Mammary epithelial cell (primary cell): ENCODE measurements at regions of chr7 and their contacts with region 1.

Region 1: GRCh38 chr7:5854738-5855137 is 25.9 kb upstream of the OCM start:
- DNase-seq: no peak
- H3K4me3 ChIP-seq: no peak overlapping the region
- H3K27ac ChIP-seq: no peak overlapping the region
- H3K4me1 ChIP-seq: no peaks in the 10 kb centered on the region
- H3K27me3 ChIP-seq: no peaks in the 10 kb centered on the region
- CTCF ChIP-seq: no peak

Region 2: GRCh38 chr7:5694912-5695726 is 159.6 kb before region 1 on chr7:
- CTCF ChIA-PET with region 1: no interaction called
- dilution Hi-C with region 1: no loop called
- in situ Hi-C with region 1: no loop called
- intact Hi-C with region 1: no loop called
- DNase-seq: peak; percentile 69
- H3K4me3 ChIP-seq: peak overlapping the region in 1 of 3 experiments; percentile 13
- H3K27ac ChIP-seq: peak overlapping the region; percentile 1
- H3K4me1 ChIP-seq: peaks cover 69% of the 10 kb centered on the region
- H3K27me3 ChIP-seq: no peaks in the 10 kb centered on the region
- CTCF ChIP-seq: no peak

Region 3: DNA sequence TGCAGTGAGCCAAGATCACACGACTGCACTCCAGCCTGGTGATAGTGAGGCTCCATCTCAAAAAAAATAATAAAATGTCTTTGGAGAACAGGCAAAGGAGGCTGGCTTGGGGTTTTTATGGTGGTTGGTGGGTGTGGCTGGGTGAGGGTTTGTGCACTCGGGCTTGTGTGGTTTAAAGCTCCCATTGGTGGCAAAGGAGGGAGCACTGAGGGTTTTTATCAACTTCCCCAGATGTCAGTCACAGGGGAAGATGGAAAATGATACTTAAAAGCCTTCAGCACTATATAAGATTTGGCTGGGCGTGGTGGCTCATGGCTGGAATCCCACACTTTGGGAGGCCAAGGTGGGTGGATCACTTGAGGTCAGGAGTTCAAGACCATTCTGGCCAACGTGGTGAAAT is 57.0 kb before region 1 on chr7:
- CTCF ChIA-PET with region 1: no interaction called
- dilution Hi-C with region 1: loop called (anchors 5 kb)
- in situ Hi-C with region 1: no loop called
- intact Hi-C with region 1: no loop called
- DNase-seq: no peak
- H3K4me3 ChIP-seq: no peak overlapping the region
- H3K27ac ChIP-seq: no peak overlapping the region
- H3K4me1 ChIP-seq: no peaks in the 10 kb centered on the region
- H3K27me3 ChIP-seq: no peaks in the 10 kb centered on the region
- CTCF ChIP-seq: no peak

Region 4: GRCh38 chr7:5997222-5997808 is 142.6 kb after region 1 on chr7:
- CTCF ChIA-PET with region 1: no interaction called
- dilution Hi-C with region 1: no loop called
- in situ Hi-C with region 1: no loop called
- intact Hi-C with region 1: loop called (anchors 10 kb)
- DNase-seq: peak; percentile 36
- H3K4me3 ChIP-seq: no peak overlapping the region
- H3K27ac ChIP-seq: no peak overlapping the region
- H3K4me1 ChIP-seq: peaks cover 5% of the 10 kb centered on the region
- H3K27me3 ChIP-seq: no peaks in the 10 kb centered on the region
- CTCF ChIP-seq: peak; percentile 36 to 52

Region 5: GRCh38 chr7:6160191-6160623 is 305.5 kb after region 1 on chr7:
- CTCF ChIA-PET with region 1: no interaction called
- dilution Hi-C with region 1: no loop called
- in situ Hi-C with region 1: no loop called
- intact Hi-C with region 1: loop called (anchors 5 kb)
- DNase-seq: peak; percentile 6
- H3K4me3 ChIP-seq: no peak overlapping the region
- H3K27ac ChIP-seq: no peak overlapping the region
- H3K4me1 ChIP-seq: no peaks in the 10 kb centered on the region
- H3K27me3 ChIP-seq: no peaks in the 10 kb centered on the region
- CTCF ChIP-seq: peak; percentile 8 to 63

Region 6: GRCh38 chr7:6435486-6436384 is 581.0 kb after region 1 on chr7:
- CTCF ChIA-PET with region 1: no interaction called
- dilution Hi-C with region 1: no loop called
- in situ Hi-C with region 1: no loop called
- intact Hi-C with region 1: loop called (anchors 5 kb)
- DNase-seq: peak; percentile 59
- H3K4me3 ChIP-seq: no peak overlapping the region
- H3K27ac ChIP-seq: no peak overlapping the region
- H3K4me1 ChIP-seq: peaks cover 11% of the 10 kb centered on the region
- H3K27me3 ChIP-seq: no peaks in the 10 kb centered on the region
- CTCF ChIP-seq: peak; percentile 94 to 95